ENCODE measurements at regions of chr5 and their contacts with region 1.

Region 1: DNA sequence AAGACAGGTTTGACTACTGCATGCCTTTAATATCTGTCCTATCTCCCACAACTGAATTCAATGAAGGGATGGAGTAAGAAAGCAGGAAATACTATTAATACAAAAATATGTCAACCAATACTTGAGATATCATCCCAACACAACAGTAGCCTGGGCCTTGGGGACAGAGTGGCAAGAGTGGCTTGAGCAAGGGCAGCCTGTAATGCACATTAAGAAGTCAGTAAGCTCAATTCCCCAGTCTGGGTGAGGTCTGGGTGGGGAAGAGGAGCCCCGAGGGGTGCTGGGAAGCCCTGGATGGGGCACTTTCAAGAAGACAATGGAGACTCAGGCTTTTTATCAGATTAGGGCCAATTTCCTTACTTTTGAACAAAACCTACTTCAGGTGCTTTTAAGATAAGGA is 25.1 kb downstream of the CARD6 start:
- DNase-seq: no peak
- ATAC-seq: no peak
- H3K4me3 ChIP-seq: no peak overlapping the region
- H3K27ac ChIP-seq: no peak overlapping the region
- H3K4me1 ChIP-seq: peaks cover 5% of the 10 kb centered on the region; the same call in 1 of the 2 replicates
- H3K27me3 ChIP-seq: no peaks in the 10 kb centered on the region
- CTCF ChIP-seq: no peak

Region 2: GRCh38 chr5:39340506-39340905 is 1525.8 kb before region 1 on chr5:
- CTCF ChIA-PET with region 1: no interaction called
- POLR2A ChIA-PET with region 1: interaction called, 17 read pairs
- intact Hi-C with region 1: no loop called
- DNase-seq: no peak
- ATAC-seq: no peak
- H3K4me3 ChIP-seq: no peak overlapping the region
- H3K27ac ChIP-seq: no peak overlapping the region
- H3K4me1 ChIP-seq: no peaks in the 10 kb centered on the region
- H3K27me3 ChIP-seq: no peaks in the 10 kb centered on the region
- CTCF ChIP-seq: no peak

Region 3: DNA sequence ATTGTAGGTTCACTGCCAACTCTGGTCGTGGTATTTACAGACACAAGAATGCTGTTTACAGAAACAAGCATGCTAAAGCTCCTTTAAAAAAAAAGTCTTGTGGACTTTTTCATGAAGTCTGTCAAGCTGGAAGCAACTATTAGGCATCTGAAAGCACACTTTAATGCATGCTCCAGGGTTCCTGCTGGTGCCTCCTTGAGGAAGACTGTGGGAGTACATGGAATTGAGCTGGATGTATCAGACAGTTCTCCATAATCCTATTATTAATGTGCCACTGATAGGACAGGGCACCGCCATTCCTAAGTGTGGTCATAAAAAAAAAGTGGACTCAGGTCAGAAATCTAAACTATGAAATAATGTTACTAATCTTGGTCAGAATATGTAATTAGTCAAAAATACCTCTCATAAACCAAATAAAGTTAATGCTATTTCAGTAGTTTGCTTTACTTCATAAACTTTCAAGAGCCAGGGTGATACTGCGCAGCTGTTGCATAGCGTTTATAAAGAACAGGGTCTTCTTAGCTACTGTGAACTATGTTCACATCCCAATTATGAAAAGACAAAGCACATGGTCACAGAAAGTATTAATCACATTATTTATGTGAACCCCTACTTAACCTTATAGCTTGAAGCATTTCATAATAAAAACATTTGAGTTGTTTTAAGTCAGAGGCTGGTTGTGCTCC is 577.3 kb before region 1 on chr5:
- CTCF ChIA-PET with region 1: no interaction called
- POLR2A ChIA-PET with region 1: no interaction called
- intact Hi-C with region 1: no loop called
- DNase-seq: no peak
- ATAC-seq: no peak
- H3K4me3 ChIP-seq: no peak overlapping the region
- H3K27ac ChIP-seq: no peak overlapping the region
- H3K4me1 ChIP-seq: no peaks in the 10 kb centered on the region
- H3K27me3 ChIP-seq: no peaks in the 10 kb centered on the region
- CTCF ChIP-seq: no peak; the same call in 1 of the 2 replicates

Measured in PC-3 (cell line).